Transverse colon (tissue), 4 donors: ENCODE measurements at regions of chr20 and their contacts with region 1.

Region 1: GRCh38 chr20:25309395-25310267 is 61.7 kb downstream of the PYGB start:
- DNase-seq: peak; percentile 77
- H3K4me3 ChIP-seq: no peak overlapping the region
- H3K27ac ChIP-seq: peak overlapping the region; percentile 86 to 87 (median 87)
- H3K4me1 ChIP-seq: peaks cover 22 to 43% (median 29%) of the 10 kb centered on the region in 4 donors
- H3K27me3 ChIP-seq: no peaks in the 10 kb centered on the region
- CTCF ChIP-seq: no peak
- EP300 ChIP-seq: no peak
- POLR2A ChIP-seq: peak; percentile 35

Region 2: DNA sequence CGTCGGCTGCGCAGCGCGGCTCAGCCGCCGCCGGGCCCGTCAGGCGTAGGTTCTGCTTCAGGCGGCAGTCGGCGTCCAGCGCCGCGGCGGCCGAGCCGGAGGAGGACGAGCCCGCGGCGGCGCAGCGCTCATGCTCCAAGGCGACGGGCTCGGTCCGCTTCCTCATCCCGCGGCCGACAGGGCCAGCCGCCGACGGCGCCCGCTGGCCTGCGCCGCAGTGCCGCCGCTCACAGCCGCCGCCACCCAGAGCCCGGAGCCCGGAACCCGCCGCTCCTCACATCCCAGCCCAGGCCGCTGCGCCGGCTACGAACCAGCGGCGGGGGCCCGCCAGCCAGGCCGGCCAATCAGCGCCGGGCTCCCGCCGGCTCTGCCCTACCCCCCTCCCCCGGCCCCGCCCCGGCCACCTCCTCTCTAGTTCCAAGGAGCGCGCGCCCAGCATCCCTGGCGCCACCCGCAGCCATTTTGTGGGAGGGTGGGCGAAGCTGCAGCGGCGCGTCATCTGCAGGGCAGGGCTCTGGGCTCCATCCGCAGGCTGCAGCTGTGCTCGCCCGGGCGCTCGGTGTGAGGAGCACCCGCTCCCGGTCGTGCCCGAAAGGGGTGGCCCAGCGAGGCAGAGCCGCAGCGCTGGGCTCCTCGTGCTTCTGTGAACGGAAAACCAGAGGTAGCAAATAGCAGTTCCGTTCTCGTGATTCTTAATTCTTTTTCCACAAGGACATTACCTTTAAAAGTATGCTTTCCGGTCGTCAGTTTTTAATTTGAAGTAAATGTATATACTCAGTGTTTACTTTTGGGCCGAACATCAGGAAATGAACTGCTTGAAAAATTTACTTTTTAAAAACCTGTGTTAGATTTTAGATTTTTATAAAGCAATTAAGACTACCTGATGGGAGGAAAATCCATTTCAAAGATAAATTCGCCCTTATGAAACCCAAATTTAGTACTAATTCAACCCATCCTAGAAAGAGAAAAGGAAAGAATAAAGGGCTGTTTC is 81.2 kb after region 1 on chr20 and contains the start of gene ABHD12:
- in situ Hi-C with region 1: loop called in 1 of 4 experiments (anchors 10 kb)
- intact Hi-C with region 1: loop called (anchors 5 kb)
- DNase-seq: peak; percentile 98
- H3K4me3 ChIP-seq: peak within 1 kb of the TSS; percentile 71 to 94 (median 74)
- H3K27ac ChIP-seq: peak within 1 kb of the TSS; percentile 94 to 98 (median 94)
- H3K4me1 ChIP-seq: peaks cover 3 to 15% (median 11%) of the 10 kb centered on the region in 4 donors
- H3K27me3 ChIP-seq: no peaks in the 10 kb centered on the region
- CTCF ChIP-seq: no peak
- EP300 ChIP-seq: no peak
- POLR2A ChIP-seq: peak; percentile 91
- total RNA-seq, gene ABHD12: 67.3 to 103 (median 73.4) TPM

Region 3: GRCh38 chr20:25399037-25399430 is 89.4 kb after region 1 on chr20:
- in situ Hi-C with region 1: loop called in 3 of 4 experiments (anchors 10 kb)
- intact Hi-C with region 1: loop called (anchors 5 kb)
- DNase-seq: peak; percentile 19
- H3K4me3 ChIP-seq: no peak overlapping the region
- H3K27ac ChIP-seq: peak overlapping the region; percentile 50 to 88 (median 79)
- H3K4me1 ChIP-seq: peaks cover 3 to 17% (median 10%) of the 10 kb centered on the region in 4 donors
- H3K27me3 ChIP-seq: no peaks in the 10 kb centered on the region
- CTCF ChIP-seq: peak; percentile 48 to 66 (median 59)
- EP300 ChIP-seq: no peak
- POLR2A ChIP-seq: no peak

Region 4: GRCh38 chr20:25407311-25408169 is 97.9 kb after region 1 on chr20 and contains the start of gene GINS1:
- in situ Hi-C with region 1: loop called in 2 of 4 experiments (anchors 10 kb)
- intact Hi-C with region 1: no loop called
- DNase-seq: peak; percentile 85
- H3K4me3 ChIP-seq: peak within 1 kb of the TSS; percentile 51 to 69 (median 56)
- H3K27ac ChIP-seq: peak within 1 kb of the TSS; percentile 70 to 80 (median 73)
- H3K4me1 ChIP-seq: peaks cover 0 to 15% (median 7%) of the 10 kb centered on the region in 4 donors
- H3K27me3 ChIP-seq: no peaks in the 10 kb centered on the region
- CTCF ChIP-seq: no peak
- EP300 ChIP-seq: no peak
- POLR2A ChIP-seq: peak; percentile 42
- total RNA-seq, gene GINS1: 1.3 to 1.4 TPM in 2 of 4 donors, not detected in the others